BJ (cell line): ENCODE measurements at regions of chr6 and their contacts with region 1.

Region 1: GRCh38 chr6:27772261-27773001 is 139.8 kb downstream of the OR2B2 start:
- DNase-seq: no peak
- H3K4me3 ChIP-seq: no peak overlapping the region
- H3K27me3 ChIP-seq: no peaks in the 10 kb centered on the region
- CTCF ChIP-seq: peak; percentile 98

Region 2: DNA sequence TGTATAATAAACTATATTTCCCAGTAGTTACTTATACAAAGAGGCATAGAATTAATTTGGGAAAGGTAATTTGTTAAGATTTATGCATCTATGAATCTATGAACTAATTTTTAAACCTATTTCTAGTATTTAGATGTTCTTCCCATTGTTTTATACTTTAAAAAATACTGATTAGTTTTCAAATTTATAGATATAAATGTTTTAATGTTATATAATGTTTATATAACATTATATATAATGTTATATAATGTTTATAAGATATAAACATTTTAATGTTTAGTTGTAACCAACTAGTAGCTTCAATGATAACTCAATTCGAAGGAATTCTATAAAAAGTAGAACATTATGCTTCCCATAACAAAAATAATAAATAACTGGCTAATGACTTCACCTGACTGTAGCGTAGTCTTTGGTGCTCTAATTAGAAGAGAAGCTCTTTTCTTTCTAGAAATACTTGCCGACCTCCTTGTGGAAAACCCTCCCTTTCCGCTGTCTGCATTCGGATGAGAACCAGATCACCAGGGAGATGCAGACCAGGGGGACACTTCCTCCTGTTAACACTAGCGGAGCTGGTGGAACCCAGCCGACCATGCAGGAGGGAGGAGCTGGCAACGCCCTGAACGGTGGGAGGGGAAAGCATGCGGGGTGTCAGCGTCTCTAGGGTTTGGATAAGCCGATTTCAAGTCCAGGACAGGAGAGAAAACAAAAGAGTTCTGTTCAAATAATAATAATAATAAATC is 18.6 kb before region 1 on chr6:
- CTCF ChIA-PET with region 1: interaction called, 31 read pairs
- POLR2A ChIA-PET with region 1: no interaction called
- DNase-seq: peak; percentile 16
- H3K4me3 ChIP-seq: peak overlapping the region; percentile 44
- H3K27me3 ChIP-seq: peaks cover 3% of the 10 kb centered on the region
- CTCF ChIP-seq: peak; percentile 27; the same call in 1 of the 2 replicates

Region 3: DNA sequence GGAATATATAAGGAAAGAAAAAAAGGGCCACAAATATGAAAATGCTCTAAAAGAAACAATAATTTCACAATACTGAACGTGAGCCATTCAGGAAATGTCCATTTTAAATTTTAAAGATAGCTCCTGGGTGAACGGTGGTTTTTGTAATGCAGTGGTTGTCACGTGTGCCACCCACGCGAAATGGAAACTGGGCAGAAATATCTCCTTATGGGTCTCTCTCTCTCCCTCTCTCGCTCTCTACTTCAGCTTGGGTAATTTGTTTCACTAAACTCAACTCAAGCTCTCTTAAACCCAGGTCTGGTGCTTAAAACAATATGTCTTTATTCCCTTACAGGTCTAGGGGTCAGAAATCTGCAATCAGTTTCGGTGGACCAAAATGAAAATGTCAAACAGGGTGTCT is 11.0 kb before region 1 on chr6:
- CTCF ChIA-PET with region 1: interaction called, 31 read pairs
- POLR2A ChIA-PET with region 1: no interaction called
- DNase-seq: no peak
- H3K4me3 ChIP-seq: no peak overlapping the region
- H3K27me3 ChIP-seq: peaks cover 6% of the 10 kb centered on the region
- CTCF ChIP-seq: no peak

Region 4: GRCh38 chr6:27782748-27783147 is 10.3 kb after region 1 on chr6:
- CTCF ChIA-PET with region 1: interaction called, 37 read pairs
- POLR2A ChIA-PET with region 1: no interaction called
- DNase-seq: no peak
- H3K4me3 ChIP-seq: no peak overlapping the region
- H3K27me3 ChIP-seq: no peaks in the 10 kb centered on the region
- CTCF ChIP-seq: no peak

Region 5: GRCh38 chr6:27795697-27796494 is 23.5 kb after region 1 on chr6:
- CTCF ChIA-PET with region 1: interaction called, 70 read pairs
- POLR2A ChIA-PET with region 1: no interaction called
- DNase-seq: peak; percentile 80
- H3K4me3 ChIP-seq: no peak overlapping the region
- H3K27me3 ChIP-seq: no peaks in the 10 kb centered on the region
- CTCF ChIP-seq: peak; percentile 75

Region 6: GRCh38 chr6:27879837-27880236 is 107.4 kb after region 1 on chr6:
- CTCF ChIA-PET with region 1: no interaction called
- POLR2A ChIA-PET with region 1: no interaction called
- DNase-seq: no peak
- H3K4me3 ChIP-seq: no peak overlapping the region
- H3K27me3 ChIP-seq: no peaks in the 10 kb centered on the region
- CTCF ChIP-seq: no peak